Endothelial cell of umbilical vein (primary cell): ENCODE measurements at regions of chr6 and their contacts with region 1.

Region 1: DNA sequence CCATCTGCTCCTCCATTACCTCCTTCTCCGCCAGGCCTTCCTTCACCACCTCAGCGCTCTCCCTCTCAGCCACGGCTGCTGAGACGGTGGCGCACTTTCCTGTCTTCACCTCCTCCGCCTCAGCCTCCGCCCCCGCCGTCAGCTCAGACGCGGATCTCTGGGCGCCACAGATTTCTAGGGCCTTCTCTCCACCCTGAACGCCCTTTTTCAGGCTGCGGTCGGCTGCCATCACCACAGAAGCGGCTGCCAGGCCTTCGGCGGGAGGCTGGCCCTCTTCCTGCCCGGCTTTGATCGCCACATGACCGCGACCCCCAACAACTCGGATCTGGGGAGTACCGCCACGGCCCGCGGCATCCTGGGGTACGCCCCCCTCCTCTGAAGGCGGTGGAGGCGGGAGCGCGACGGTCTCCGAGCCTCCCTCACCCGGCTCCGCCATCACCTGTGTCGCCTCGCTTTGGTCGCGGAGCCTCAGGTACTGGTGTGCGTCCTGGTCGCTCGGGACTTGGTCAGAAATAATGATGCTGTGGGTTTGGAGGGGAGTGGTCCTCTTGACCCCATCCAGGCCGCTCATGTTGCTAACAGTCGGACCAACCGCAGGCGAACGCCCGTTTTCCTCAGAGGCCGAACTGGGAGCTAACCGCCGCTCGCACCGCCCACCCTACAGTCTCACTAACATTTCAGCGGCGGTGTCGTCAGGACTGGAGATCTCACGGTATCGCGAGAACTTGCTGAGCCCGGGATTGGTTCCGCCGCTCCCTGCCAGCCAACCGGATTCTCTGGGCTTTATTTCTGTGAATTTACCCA is at the start of gene TSPYL1:
- DNase-seq: peak; percentile 98
- H3K4me3 ChIP-seq: peak within 1 kb of the TSS; percentile 44 to 79 (median 53)
- H3K27ac ChIP-seq: peak within 1 kb of the TSS; percentile 84
- H3K4me1 ChIP-seq: peaks cover 37% of the 10 kb centered on the region
- H3K27me3 ChIP-seq: no peaks in the 10 kb centered on the region
- CTCF ChIP-seq: no peak
- POLR2A ChIP-seq: peak; percentile 90
- total RNA-seq, gene TSPYL1: 54.5 and 57.3 TPM in 2 replicates

Region 2: DNA sequence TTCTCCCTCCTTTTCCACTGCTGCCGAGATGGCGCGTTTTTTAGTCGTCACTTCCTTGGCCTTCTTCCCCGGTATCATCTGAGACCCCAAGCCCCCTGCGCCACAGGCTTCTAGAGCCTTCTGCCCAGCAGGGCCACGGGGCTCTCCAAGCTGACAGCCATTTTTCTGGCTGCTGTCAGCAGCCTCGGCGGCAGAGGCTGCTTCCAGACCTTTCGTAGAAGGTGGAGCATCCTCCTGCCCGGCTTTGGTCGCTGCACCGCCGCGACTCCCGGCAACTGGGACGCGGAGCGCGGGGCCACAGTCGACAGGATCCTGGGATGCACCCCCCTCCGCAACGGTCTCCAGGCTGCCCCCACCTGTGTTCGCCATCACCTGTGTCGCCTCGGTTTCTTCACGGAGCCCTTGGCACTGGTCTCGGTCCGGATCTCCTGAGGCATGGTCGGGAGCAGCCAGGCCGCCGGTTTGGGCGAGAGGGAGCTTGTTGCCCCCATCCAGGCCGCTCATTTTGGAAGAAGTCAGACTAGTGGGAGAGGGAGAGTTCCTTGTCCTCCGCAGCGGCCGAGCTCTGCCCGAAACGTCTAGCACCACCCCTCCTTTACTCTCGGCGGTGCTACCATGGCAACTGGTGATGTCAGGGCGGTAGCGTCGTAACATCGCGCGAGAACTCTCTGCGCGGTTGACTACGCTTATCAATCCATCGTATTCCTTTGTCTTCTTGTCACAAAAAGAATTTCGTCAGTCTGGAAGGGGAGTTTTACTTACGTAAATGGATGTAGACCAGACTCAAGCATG is 25.8 kb before region 1 on chr6 and contains the start of gene TSPYL4:
- CTCF ChIA-PET with region 1: interaction called, 4 read pairs
- POLR2A ChIA-PET with region 1: interaction called, 4 read pairs
- dilution Hi-C with region 1: no loop called
- intact Hi-C with region 1: loop called (anchors 1 kb)
- DNase-seq: peak; percentile 98
- H3K4me3 ChIP-seq: peak within 1 kb of the TSS; percentile 40 to 95 (median 77)
- H3K27ac ChIP-seq: peak within 1 kb of the TSS; percentile 98
- H3K4me1 ChIP-seq: peaks cover 53% of the 10 kb centered on the region
- H3K27me3 ChIP-seq: no peaks in the 10 kb centered on the region
- CTCF ChIP-seq: no peak
- POLR2A ChIP-seq: peak; percentile 83
- total RNA-seq, gene TSPYL4: 24.5 and 34.4 TPM in 2 replicates

Region 3: GRCh38 chr6:116570856-116571682 is 291.6 kb after region 1 on chr6 and contains the start of gene RWDD1:
- CTCF ChIA-PET with region 1: no interaction called
- POLR2A ChIA-PET with region 1: interaction called, 3 read pairs
- dilution Hi-C with region 1: no loop called
- intact Hi-C with region 1: loop called (anchors 1 kb)
- DNase-seq: peak; percentile 99
- H3K4me3 ChIP-seq: peak within 1 kb of the TSS; percentile 87 to 98 (median 98)
- H3K27ac ChIP-seq: peak within 1 kb of the TSS; percentile 84
- H3K4me1 ChIP-seq: peaks cover 33% of the 10 kb centered on the region
- H3K27me3 ChIP-seq: no peaks in the 10 kb centered on the region
- CTCF ChIP-seq: no peak
- POLR2A ChIP-seq: peak; percentile 89
- total RNA-seq, gene RWDD1: 37.9 and 44.2 TPM in 2 replicates

Region 4: GRCh38 chr6:116615937-116616736 is 336.7 kb after region 1 on chr6 and contains the start of gene RSPH4A:
- CTCF ChIA-PET with region 1: no interaction called
- POLR2A ChIA-PET with region 1: no interaction called
- dilution Hi-C with region 1: no loop called
- intact Hi-C with region 1: loop called (anchors 1 kb)
- DNase-seq: peak; percentile 98
- H3K4me3 ChIP-seq: peak within 1 kb of the TSS; percentile 52 to 84 (median 70)
- H3K27ac ChIP-seq: no peak within 1 kb of the TSS
- H3K4me1 ChIP-seq: peaks cover 9% of the 10 kb centered on the region
- H3K27me3 ChIP-seq: peaks cover 6 to 16% of the 10 kb centered on the region in 2 experiments
- CTCF ChIP-seq: no peak
- POLR2A ChIP-seq: no peak
- total RNA-seq, gene RSPH4A: 0.15 and 0.18 TPM in 2 replicates